ENCODE measurements at regions of chr15 and their contacts with region 1.

Region 1: DNA sequence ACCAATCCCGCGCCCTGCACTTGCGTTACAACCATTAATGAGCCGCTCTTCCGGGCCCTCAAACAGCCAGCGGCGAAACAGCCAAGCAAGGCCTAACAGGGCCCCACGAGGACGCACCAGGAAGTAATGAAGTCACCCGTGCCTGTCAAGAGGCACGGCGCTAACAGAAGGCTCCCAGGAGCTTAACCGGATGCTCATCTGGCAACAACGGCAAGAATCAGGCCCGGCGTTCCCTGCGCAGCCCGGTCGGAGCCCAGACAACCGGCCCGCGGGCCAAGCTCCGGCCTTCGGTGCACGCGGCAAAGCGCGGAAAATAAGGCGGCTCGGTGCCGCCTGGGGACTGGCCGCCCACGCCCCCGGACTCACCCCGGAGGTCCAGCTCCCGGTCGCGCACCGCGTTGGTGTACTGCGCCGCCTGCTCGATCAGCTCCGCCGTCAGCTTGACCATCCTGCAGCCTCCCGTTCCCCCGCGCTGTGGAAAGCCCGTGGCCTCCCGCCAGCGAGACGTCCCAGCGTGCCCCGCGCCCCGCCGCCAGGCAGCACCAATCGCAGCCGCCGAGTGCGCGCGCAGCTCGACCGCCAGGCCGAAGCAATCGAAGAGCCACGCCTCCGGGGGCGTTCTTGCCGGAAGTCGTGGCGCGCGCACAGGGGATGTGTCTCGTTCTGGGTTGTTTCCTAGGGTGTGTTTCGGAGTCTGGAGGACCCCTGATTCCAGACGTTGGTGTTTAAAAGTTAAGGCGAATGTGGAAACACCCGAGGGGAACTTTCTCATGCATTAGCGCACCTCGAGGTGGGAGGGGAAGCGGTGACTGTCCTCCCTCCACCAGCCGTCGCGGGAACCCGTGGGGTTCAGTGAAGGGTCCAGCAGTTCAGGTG is at the start of gene SNRPA1:
- DNase-seq: peak; percentile 86 to 96 (median 92)
- H3K4me3 ChIP-seq: peak within 1 kb of the TSS; percentile 63 to 100 (median 94)
- H3K27ac ChIP-seq: peak within 1 kb of the TSS; percentile 23 to 97 (median 89)
- H3K27me3 ChIP-seq: no peaks in the 10 kb centered on the region
- CTCF ChIP-seq: peak in 42 of 56 donors; percentile 4 to 67 (median 38)
- total RNA-seq, gene SNRPA1: 22.5 to 70.1 (median 45.4) TPM

Region 2: GRCh38 chr15:101277038-101277882 is 17.7 kb before region 1 on chr15 and contains the start of gene SELENOS:
- intact Hi-C with region 1: loop called (anchors 1 to 2 kb)
- DNase-seq: peak; percentile 72 to 94 (median 81)
- H3K4me3 ChIP-seq: peak within 1 kb of the TSS; percentile 71 to 100 (median 93)
- H3K27ac ChIP-seq: peak within 1 kb of the TSS in 51 of 59 donors; percentile 0 to 91 (median 75)
- H3K27me3 ChIP-seq: no peaks in the 10 kb centered on the region
- CTCF ChIP-seq: peak in 29 of 56 donors; percentile 4 to 62 (median 29)
- total RNA-seq, gene SELENOS: 17.2 to 38.9 (median 26.4) TPM

Region 3: DNA sequence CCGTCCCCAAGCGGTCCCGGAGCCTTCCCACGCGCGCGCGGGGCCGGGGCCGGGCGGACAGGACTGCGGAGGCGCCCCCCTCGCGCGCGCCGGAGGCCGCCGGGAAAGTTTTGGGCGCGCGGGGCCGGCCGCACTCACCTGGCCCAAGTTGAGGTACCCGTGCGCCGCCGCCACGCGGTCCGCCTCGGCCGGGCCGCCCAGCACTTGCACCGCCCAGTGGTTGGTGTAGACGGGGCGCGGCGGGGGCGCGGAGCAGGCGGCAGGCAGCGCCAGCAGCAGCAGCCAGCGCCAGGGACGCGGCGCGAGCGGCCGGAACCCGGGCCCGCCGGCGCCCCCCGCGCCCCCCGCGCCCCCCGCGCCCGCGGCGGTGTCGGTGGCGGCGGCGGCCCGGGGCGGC is 194.3 kb after region 1 on chr15:
- intact Hi-C with region 1: loop called in 1 of 2 experiments (anchors 2 kb)
- DNase-seq: peak in 1 of 10 donors; percentile 16
- H3K4me3 ChIP-seq: peak overlapping the region in 45 of 59 donors; percentile 28 to 72 (median 57)
- H3K27ac ChIP-seq: peak overlapping the region in 9 of 59 donors; percentile 35 to 89 (median 79)
- H3K27me3 ChIP-seq: peaks cover 0 to 17% (median 3%) of the 10 kb centered on the region in 45 donors
- CTCF ChIP-seq: peak in 1 of 56 donors; percentile 10

Region 4: DNA sequence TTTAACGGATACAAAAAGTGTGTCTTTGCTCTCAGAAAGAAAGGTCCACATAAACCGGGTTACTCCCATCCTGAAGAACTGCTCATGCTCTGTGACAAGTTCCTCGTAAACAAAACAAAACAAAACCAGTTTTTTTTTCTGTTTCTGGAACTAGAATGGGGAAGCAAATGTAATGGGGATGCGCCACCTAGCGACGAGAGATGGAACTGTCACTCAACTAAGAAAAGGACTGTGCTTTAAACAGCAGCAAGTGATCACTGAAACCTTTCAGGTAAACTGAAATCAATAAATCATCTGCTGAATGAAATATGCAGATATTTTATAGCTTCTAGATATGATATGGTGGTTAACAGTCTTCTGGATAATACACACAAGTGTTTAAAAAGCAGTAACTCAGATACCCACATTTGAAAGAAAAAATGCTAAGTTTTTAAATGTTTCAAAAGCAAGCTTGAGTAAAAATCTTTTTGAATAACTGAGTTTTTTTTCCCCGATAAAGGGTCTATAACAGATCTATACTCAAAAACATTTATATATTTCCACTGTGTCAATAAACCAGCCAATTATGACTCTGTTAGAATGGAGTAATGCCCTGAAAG is 346.3 kb after region 1 on chr15:
- intact Hi-C with region 1: loop called (anchors 2 kb)
- DNase-seq: peak in 9 of 10 donors; percentile 64 to 90 (median 75)
- H3K4me3 ChIP-seq: peak overlapping the region in 37 of 59 donors; percentile 1 to 52 (median 21)
- H3K27ac ChIP-seq: peak overlapping the region; percentile 67 to 98 (median 92)
- H3K27me3 ChIP-seq: no peaks in the 10 kb centered on the region
- CTCF ChIP-seq: peak; percentile 86 to 100 (median 98)

Region 5: DNA sequence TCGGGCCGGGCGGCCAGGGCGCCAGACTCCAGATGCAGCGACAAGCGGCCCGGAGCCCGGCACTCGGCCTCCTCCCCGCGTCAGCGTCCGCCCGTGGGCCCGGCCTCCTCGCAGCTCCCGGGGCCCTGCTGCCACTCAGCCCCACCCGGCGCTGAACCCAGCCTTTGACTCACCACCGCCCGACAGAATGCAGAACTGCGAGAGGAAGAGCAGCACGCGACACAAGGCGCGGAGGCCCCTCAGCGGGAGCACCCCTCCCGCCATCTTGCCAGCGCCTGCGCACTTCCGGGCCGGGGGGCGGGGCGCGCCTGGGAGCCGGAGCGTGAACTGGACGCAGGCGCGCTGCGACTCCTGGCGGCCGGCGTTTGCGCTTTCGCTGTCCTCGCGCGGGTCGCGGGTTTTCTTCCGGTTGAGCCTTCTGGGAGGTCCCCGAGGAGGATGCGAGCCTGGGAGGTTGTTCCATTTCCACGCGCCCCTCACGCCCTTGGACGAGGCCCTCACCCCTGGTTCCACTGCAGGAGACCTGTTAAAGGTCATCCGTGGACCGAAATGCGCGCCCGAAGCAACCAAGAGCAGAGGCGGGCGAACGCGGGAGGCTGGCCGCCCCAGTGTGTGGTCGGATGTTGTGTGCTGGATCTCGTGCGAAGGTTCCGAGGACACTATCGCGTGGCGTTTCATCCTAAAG is 357.3 kb after region 1 on chr15 and contains the start of gene TM2D3:
- intact Hi-C with region 1: loop called in 1 of 2 experiments (anchors 1 kb)
- DNase-seq: peak; percentile 75 to 92 (median 90)
- H3K4me3 ChIP-seq: peak within 1 kb of the TSS; percentile 58 to 100 (median 91)
- H3K27ac ChIP-seq: peak within 1 kb of the TSS; percentile 82 to 99 (median 97)
- H3K27me3 ChIP-seq: no peaks in the 10 kb centered on the region
- CTCF ChIP-seq: peak; percentile 41 to 93 (median 80)
- total RNA-seq, gene TM2D3: 50.8 to 137 (median 106) TPM

Region 6: DNA sequence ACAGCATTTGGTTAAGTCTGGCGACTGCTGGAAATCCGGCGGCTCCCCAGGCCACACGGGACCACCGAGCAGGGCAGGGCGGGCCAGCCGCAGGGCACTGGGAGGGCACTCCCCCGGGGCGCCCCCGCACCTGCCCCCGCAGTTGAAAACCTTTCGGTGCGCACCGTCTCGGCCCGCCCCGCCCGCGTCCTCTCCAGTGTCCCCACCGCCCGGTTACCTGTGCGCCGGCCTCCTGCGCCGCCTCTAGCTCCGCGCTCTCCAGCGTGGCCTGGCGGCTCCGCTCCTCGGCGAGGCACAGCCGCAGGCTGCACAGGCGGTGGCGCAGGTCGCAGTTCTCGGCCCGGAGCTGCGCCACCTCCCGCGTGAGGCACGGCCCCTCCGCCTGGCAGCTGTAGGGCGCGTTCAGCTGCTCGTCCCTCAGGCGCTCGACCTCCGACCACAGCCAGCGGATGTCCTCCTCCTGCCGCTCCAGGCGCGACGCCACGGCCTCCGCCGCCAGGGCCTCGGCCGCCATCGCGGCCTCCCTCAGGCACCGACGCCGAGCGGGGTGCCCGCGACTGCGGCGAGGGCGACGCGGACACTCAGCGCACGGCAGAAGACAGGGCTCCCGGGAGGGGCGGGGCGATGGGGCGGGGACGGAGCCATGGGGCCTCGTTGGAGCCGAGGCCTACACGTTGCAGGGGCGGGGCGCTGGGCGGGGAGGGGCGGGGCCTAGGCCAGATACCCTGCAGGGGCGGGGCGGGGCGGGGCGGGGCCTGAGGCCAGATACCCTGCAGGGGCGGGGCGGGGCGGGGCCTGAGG is 429.1 kb after region 1 on chr15 and contains the start of gene TARS3:
- intact Hi-C with region 1: loop called in 1 of 2 experiments (anchors 10 kb)
- DNase-seq: peak; percentile 91 to 96 (median 94)
- H3K4me3 ChIP-seq: peak within 1 kb of the TSS; percentile 65 to 98 (median 90)
- H3K27ac ChIP-seq: peak within 1 kb of the TSS in 57 of 59 donors; percentile 32 to 94 (median 86)
- H3K27me3 ChIP-seq: no peaks in the 10 kb centered on the region
- CTCF ChIP-seq: peak in 24 of 56 donors; percentile 8 to 62 (median 24)
- total RNA-seq, gene TARS3: 33.7 to 81.2 (median 49.6) TPM